ENCODE measurements at regions of chr1 and their contacts with region 1.

Region 1: GRCh38 chr1:205485338-205486228 is 18.9 kb upstream of the CDK18 start:
- H3K4me3 ChIP-seq: no peak overlapping the region
- H3K27ac ChIP-seq: no peak overlapping the region
- H3K4me1 ChIP-seq: no peaks in the 10 kb centered on the region
- CTCF ChIP-seq: peak; percentile 94

Region 2: GRCh38 chr1:205273551-205273982 is 212.0 kb before region 1 on chr1:
- CTCF ChIA-PET with region 1: interaction called, 30 read pairs
- POLR2A ChIA-PET with region 1: no interaction called
- H3K4me3 ChIP-seq: no peak overlapping the region
- H3K27ac ChIP-seq: no peak overlapping the region
- H3K4me1 ChIP-seq: no peaks in the 10 kb centered on the region
- CTCF ChIP-seq: peak; percentile 93

Region 3: DNA sequence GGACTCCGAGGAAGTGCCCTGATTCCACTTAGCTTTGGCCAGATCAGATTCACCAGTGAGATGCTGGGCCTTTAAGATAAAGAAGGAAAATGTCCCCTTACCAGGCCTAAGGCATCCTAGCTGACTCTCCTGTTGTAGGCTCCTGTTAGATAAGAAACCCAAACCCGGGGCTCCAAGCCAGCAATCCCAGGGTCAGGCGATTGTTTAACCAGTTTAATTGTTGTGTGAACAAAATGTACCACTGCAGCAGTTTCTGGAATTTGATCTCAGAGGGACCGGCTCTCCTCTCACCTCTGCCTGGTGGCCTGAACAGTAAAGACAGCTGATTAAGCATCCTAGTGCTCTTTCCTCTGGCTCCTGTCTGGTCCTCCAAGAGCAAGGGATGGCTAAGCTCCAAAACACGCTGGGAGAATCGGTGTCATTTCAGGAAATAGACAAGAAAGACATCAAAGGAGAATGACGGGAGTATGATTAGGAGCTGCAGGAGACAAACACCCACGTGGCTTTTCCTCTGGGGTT is 119.6 kb before region 1 on chr1:
- CTCF ChIA-PET with region 1: interaction called, 10 read pairs
- POLR2A ChIA-PET with region 1: no interaction called
- H3K4me3 ChIP-seq: no peak overlapping the region
- H3K27ac ChIP-seq: no peak overlapping the region
- H3K4me1 ChIP-seq: no peaks in the 10 kb centered on the region
- CTCF ChIP-seq: no peak

Region 4: DNA sequence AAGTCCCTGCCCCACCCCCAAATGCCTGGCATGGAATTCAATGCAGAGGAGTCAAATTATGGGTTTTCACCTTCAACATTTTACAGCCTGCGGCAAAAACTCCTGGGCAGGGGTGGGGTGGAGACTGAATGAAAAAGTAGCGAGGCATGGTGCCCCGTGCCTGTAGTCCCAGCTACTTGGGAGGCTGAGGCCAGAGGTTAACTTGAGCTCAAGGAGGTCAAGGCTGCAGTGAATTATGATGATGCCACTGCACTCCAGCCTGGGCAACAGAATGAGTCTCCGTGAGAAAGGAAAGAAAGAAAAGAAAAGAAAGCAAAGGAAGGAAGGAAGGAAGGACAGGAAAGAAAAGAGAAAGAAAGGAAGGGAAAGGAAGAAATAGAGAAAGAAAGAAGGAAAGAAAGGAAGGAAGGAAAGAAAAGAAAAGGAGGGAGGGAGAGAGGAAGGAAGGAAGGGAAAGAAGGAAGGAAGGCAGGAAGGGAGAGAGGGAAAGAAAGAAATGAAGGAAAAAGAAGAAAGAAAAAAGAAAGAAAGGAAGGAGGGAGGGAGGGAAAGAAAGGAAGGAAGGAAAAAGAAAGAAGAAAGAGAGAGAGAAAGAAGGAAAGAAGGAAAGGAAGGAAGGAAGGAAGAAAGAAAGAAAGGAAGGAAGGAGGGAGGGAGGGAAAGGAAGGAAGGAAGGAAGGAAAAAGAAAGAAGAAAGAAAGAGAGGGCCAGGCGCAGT is 74.8 kb before region 1 on chr1:
- CTCF ChIA-PET with region 1: interaction called, 24 read pairs
- POLR2A ChIA-PET with region 1: no interaction called
- H3K4me3 ChIP-seq: no peak overlapping the region
- H3K27ac ChIP-seq: no peak overlapping the region
- H3K4me1 ChIP-seq: no peaks in the 10 kb centered on the region
- CTCF ChIP-seq: no peak

Region 5: GRCh38 chr1:205430696-205431305 is 54.8 kb before region 1 on chr1:
- CTCF ChIA-PET with region 1: interaction called, 50 read pairs
- POLR2A ChIA-PET with region 1: no interaction called
- H3K4me3 ChIP-seq: peak overlapping the region; percentile 46
- H3K27ac ChIP-seq: no peak overlapping the region
- H3K4me1 ChIP-seq: 0 out of 2 replicates have a peak, but pooled peaks cover 2% of the 10 kb centered on the region
- CTCF ChIP-seq: peak; percentile 93

Region 6: DNA sequence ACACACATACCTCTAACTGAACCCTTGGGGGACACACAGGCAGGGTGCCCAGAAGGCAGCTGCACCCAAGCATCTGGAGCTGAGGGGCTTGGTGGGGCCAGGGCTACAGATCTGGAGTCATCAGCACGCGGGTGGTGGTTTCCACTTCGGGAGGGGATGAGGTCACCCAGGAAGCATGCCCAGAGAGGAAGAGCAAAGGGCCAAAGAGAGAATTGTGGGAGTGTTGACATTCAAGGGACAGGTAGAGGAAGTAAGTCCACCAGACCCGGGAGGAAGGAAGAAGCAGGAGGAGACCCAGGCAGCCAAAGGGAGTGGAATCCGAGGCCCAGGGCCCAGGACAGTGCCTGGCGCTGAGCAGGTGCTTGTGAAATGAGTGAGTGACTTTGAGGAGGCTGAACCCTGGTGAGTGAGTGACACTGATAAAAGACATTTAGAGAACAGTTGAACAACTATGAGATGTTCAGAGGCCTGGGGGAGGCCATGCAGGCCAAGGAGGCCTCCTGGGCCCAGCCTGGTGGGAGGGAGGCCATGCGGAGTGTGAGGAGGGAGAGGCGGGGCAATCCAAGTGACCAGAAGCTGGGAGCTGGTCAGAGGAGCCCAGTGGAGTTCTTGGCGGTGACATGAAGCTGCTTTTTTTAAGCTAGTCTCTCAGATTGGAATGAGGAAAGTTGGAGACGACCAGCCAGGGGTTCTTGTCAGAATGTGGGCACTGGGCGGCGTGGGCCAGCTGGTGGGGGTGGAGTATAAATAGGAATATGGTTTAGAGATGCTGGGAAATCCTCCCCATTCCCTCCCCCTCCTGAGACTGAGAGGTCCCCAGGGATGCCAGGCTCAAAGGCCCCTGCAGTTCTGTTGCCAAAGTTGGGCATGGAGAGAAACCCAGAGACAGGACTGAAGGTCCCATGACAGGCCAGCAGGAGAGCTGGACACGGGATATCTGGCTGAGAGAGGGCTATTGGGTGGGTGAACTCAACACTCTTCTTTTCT is 26.8 kb after region 1 on chr1:
- CTCF ChIA-PET with region 1: interaction called, 18 read pairs
- POLR2A ChIA-PET with region 1: no interaction called
- H3K4me3 ChIP-seq: no peak overlapping the region
- H3K27ac ChIP-seq: no peak overlapping the region
- H3K4me1 ChIP-seq: no peaks in the 10 kb centered on the region
- CTCF ChIP-seq: no peak

Region 7: GRCh38 chr1:205528887-205529825 is 43.6 kb after region 1 on chr1:
- CTCF ChIA-PET with region 1: interaction called, 459 read pairs
- POLR2A ChIA-PET with region 1: interaction called, 7 read pairs
- H3K4me3 ChIP-seq: no peak overlapping the region
- H3K27ac ChIP-seq: no peak overlapping the region
- H3K4me1 ChIP-seq: no peaks in the 10 kb centered on the region
- CTCF ChIP-seq: peak; percentile 97

Region 8: DNA sequence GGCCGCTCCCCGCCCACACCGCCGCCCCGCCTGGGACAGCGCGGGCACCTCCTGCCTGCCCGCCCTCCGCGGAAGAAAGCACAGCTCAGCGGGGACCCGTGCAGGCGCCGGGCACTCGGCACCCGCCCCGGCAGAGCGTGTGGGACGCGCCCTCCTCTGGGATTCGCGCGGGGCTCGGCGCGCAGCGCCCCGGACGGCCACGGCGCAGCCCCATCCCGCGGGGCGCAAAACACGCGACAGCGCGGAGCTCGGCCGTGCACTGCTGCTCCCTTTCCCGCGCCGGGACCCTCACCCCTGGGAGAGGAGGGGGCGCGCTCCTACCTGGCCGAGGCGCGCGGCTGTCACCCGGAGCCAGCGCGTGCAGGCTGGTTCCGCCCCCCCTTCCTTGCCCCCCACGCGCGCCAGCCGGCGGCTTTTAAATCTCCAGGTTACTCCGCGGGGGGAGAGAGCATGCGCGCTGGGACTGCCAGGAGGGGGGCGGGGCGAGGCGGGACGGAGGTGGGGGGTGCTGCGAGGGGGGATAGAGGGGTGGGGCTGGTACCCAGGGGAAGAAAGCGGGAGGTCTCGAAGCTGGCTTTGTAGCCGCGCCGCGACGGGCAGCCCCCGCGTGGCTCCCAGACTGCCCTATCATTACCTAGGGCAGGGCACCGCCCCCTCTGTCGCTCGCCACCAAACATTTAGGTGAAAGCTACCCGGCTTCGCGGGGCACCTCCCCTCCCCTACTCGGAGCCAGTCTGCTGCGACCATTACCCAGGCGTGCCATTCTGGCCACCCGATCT is 194.7 kb after region 1 on chr1 and contains the start of gene SLC45A3:
- CTCF ChIA-PET with region 1: no interaction called
- POLR2A ChIA-PET with region 1: no interaction called
- H3K4me3 ChIP-seq: peak within 1 kb of the TSS; percentile 67
- H3K27ac ChIP-seq: peak within 1 kb of the TSS; percentile 58; the same call in 1 of the 2 replicates
- H3K4me1 ChIP-seq: no peaks in the 10 kb centered on the region
- CTCF ChIP-seq: no peak